Brain microvascular endothelial cell (primary cell): ENCODE measurements at regions of chr5 and their contacts with region 1.

Region 1: GRCh38 chr5:175464074-175464941 is 14.1 kb upstream of the SFXN1 start:
- DNase-seq: peak; percentile 25
- H3K4me3 ChIP-seq: no peak overlapping the region
- H3K27ac ChIP-seq: no peak overlapping the region
- H3K27me3 ChIP-seq: no peaks in the 10 kb centered on the region
- CTCF ChIP-seq: peak; percentile 85

Region 2: DNA sequence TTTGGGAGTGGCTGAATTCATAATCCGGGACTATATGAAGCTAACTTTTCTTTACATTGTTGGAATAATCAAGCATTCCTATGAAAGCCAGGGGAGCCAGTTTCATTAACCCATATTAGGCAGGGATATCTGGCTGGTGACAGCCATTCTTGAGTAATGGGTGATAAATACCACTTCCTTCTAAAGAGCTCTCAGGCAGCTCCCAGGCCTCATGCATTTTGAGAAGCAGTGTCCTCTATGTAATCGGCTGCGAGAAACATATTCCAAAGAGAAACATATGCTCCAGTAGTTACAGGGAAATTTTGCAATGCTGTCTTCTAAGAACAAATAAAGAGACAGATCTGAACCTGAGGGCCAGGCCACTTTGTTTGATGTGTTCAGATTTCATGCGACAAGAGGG is 656.8 kb before region 1 on chr5:
- in situ Hi-C with region 1: no loop called
- DNase-seq: no peak
- H3K4me3 ChIP-seq: no peak overlapping the region
- H3K27ac ChIP-seq: no peak overlapping the region
- H3K27me3 ChIP-seq: no peaks in the 10 kb centered on the region
- CTCF ChIP-seq: no peak

Region 3: GRCh38 chr5:174951146-174951780 is 513.0 kb before region 1 on chr5:
- in situ Hi-C with region 1: loop called (anchors 25 kb)
- DNase-seq: peak; percentile 48
- H3K4me3 ChIP-seq: no peak overlapping the region
- H3K27ac ChIP-seq: no peak overlapping the region
- H3K27me3 ChIP-seq: no peaks in the 10 kb centered on the region
- CTCF ChIP-seq: peak; percentile 91

Region 4: GRCh38 chr5:175746851-175747250 is 282.5 kb after region 1 on chr5:
- in situ Hi-C with region 1: no loop called
- DNase-seq: peak; percentile 3
- H3K4me3 ChIP-seq: no peak overlapping the region
- H3K27ac ChIP-seq: no peak overlapping the region
- H3K27me3 ChIP-seq: no peaks in the 10 kb centered on the region
- CTCF ChIP-seq: no peak

Region 5: DNA sequence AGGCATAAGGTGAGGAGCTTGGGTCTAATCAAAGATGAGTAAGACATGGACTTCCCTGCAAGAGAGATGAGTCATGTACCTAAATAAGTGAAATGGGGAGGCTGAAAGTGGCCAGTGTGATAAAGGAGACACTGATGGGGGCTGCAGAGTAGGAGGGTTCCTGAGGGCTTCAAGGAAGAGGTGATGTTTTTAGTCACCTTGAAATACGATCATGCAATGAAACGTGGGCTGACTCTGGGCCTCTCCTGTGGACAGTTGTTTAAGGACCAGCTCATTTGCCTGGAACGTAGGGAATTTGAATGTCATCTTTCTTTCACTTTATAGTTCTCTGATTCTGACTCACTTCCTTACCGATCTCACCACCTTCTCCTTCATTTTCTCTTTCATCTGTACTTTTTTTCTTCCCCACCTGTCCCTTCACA is 357.5 kb after region 1 on chr5:
- in situ Hi-C with region 1: no loop called
- DNase-seq: no peak
- H3K4me3 ChIP-seq: no peak overlapping the region
- H3K27ac ChIP-seq: no peak overlapping the region
- H3K27me3 ChIP-seq: no peaks in the 10 kb centered on the region
- CTCF ChIP-seq: no peak